ENCODE measurements at regions of chr1 and their contacts with region 1.

Region 1: GRCh38 chr1:179809506-179810366 is 66.6 kb downstream of the FAM163A start:
- H3K4me3 ChIP-seq: no peak overlapping the region
- H3K27ac ChIP-seq: no peak overlapping the region
- H3K4me1 ChIP-seq: no peaks in the 10 kb centered on the region
- CTCF ChIP-seq: peak; percentile 81

Region 2: GRCh38 chr1:179761296-179761695 is 48.4 kb before region 1 on chr1:
- CTCF ChIA-PET with region 1: interaction called, 10 read pairs
- POLR2A ChIA-PET with region 1: no interaction called
- H3K4me3 ChIP-seq: no peak overlapping the region
- H3K27ac ChIP-seq: no peak overlapping the region
- H3K4me1 ChIP-seq: no peaks in the 10 kb centered on the region
- CTCF ChIP-seq: no peak

Region 3: GRCh38 chr1:179786815-179787685 is 22.7 kb before region 1 on chr1:
- CTCF ChIA-PET with region 1: interaction called, 27 read pairs
- POLR2A ChIA-PET with region 1: no interaction called
- H3K4me3 ChIP-seq: no peak overlapping the region
- H3K27ac ChIP-seq: no peak overlapping the region
- H3K4me1 ChIP-seq: peaks cover 5% of the 10 kb centered on the region; the same call in 1 of the 2 replicates
- CTCF ChIP-seq: no peak

Region 4: DNA sequence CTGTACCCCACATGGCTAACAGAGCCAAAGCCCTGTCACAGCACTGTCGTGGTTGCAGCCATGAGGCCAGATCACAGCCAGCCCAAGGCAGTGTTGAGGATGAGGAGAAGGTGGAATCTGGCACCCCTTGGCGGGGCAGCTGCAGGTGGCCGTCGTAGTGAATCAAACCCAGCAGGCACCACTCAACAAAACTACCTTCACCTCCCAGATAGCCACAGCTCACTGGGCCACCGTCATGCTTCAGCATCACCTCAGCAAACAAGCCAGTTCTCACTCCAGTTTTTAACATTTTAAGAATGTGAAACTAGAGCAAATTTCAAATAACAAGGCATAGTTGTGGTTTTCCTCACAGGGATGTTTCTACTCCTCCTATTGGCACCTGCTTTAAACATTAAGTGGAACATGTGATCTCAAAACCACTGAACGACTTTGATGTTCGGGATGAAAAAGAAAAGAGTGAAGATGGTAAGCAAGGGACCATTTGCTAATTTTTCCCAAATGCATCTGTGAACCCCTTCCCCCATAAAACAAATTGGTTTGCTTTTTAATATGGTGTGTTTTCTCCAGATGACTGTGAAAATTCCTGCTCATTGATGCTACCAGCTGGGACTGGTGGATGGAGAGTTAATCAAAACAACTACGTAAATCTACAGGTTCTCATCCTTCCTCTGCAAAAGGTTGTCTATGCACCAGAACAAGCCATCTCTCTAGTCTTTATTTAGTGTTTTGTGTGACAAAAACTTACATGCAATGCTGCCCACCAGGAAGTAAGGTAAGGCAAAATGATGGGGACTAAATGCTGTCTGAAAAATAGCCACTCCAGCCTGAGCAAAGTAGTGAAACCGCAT is 22.3 kb after region 1 on chr1:
- CTCF ChIA-PET with region 1: interaction called, 16 read pairs
- POLR2A ChIA-PET with region 1: no interaction called
- H3K4me3 ChIP-seq: no peak overlapping the region
- H3K27ac ChIP-seq: no peak overlapping the region
- H3K4me1 ChIP-seq: no peaks in the 10 kb centered on the region
- CTCF ChIP-seq: no peak

Region 5: DNA sequence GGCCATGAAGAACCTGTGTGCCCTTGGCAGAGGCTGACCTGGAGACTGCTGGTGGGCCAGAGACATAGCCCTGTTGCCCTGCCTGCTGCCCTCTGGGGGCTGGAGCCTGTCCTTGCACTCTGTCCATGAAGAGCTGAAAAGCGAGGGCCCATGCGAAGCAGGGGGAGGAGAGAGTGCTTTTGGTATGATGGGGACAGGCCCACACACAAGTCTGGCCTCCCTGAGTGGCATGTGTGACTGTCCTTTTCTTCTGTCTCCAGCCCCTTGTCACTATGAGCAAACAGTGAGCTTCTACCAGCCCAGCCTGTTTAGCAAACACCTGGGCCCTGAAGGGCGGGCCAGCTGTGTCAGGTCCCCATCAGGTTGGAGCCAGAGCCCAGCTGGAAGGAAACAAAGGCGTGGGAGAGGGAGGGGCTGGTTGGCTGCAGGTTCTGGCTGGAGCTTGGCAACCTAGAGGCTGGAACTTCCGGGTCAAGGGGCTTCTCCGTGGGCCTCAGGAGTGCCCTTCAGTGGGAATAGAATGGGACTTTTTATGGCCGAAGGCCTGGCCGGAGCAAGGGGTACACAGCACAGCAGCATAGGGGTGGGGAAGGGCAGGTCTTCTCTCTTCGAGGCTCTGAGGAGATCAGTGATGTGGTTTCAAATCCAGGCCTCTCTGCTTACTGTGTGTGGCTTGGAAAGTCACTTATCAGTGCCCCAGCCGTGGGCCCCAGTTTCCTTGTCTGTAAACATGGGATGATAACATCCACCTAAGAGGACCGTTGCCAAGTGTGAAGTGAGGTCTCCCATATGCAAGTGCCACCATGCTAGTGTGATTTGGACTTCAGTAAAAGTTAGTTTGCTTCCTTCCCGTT is 359.3 kb after region 1 on chr1:
- CTCF ChIA-PET with region 1: interaction called, 19 read pairs
- POLR2A ChIA-PET with region 1: no interaction called
- H3K4me3 ChIP-seq: no peak overlapping the region
- H3K27ac ChIP-seq: no peak overlapping the region
- H3K4me1 ChIP-seq: peaks cover 11% of the 10 kb centered on the region
- CTCF ChIP-seq: peak; percentile 49; the same call in 1 of the 2 replicates

Measured in HEK293 (cell line).